Endothelial cell of umbilical vein (primary cell): ENCODE measurements at regions of chr13 and their contacts with region 1.

Region 1: GRCh38 chr13:109243311-109243951 is 543.0 kb downstream of the IRS2 start:
- DNase-seq: peak; percentile 78
- H3K4me3 ChIP-seq: no peak overlapping the region
- H3K27ac ChIP-seq: peak overlapping the region; percentile 84
- H3K4me1 ChIP-seq: peaks cover 27% of the 10 kb centered on the region
- H3K27me3 ChIP-seq: no peaks in the 10 kb centered on the region
- CTCF ChIP-seq: no peak
- POLR2A ChIP-seq: no peak

Region 2: GRCh38 chr13:109156181-109156935 is 87.1 kb before region 1 on chr13:
- CTCF ChIA-PET with region 1: interaction called, 5 read pairs
- POLR2A ChIA-PET with region 1: no interaction called
- dilution Hi-C with region 1: no loop called
- intact Hi-C with region 1: loop called (anchors 1 kb)
- DNase-seq: peak; percentile 91
- H3K4me3 ChIP-seq: no peak overlapping the region
- H3K27ac ChIP-seq: peak overlapping the region; percentile 87
- H3K4me1 ChIP-seq: peaks cover 39% of the 10 kb centered on the region
- H3K27me3 ChIP-seq: no peaks in the 10 kb centered on the region
- CTCF ChIP-seq: no peak
- POLR2A ChIP-seq: no peak

Region 3: GRCh38 chr13:109198585-109198984 is 44.8 kb before region 1 on chr13:
- CTCF ChIA-PET with region 1: no interaction called
- POLR2A ChIA-PET with region 1: no interaction called
- dilution Hi-C with region 1: no loop called
- intact Hi-C with region 1: loop called (anchors 1 kb)
- DNase-seq: peak; percentile 6
- H3K4me3 ChIP-seq: no peak overlapping the region
- H3K27ac ChIP-seq: peak overlapping the region; percentile 7
- H3K4me1 ChIP-seq: peaks cover 18% of the 10 kb centered on the region
- H3K27me3 ChIP-seq: no peaks in the 10 kb centered on the region
- CTCF ChIP-seq: no peak
- POLR2A ChIP-seq: no peak

Region 4: DNA sequence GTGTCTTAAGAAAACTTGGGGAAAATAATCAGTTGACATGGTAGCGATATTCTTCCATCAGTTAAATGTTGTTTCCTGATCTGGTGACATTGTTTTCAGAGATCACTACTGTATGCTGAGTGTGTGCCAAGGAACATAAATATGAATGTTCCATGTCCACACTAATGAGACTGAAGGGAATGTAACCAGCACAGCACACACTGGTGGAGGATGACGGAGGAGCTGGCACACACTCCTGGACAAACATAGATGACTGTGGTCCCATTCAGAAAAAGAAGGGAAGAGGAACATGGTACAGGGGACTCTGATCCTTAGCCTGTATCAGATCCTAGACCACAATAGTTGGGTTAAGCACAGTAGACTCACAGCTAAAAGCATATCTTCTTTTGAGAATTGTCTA is 39.2 kb before region 1 on chr13:
- CTCF ChIA-PET with region 1: no interaction called
- POLR2A ChIA-PET with region 1: no interaction called
- dilution Hi-C with region 1: no loop called
- intact Hi-C with region 1: loop called (anchors 1 kb)
- DNase-seq: peak; percentile 82
- H3K4me3 ChIP-seq: no peak overlapping the region
- H3K27ac ChIP-seq: peak overlapping the region; percentile 20
- H3K4me1 ChIP-seq: peaks cover 35% of the 10 kb centered on the region
- H3K27me3 ChIP-seq: no peaks in the 10 kb centered on the region
- CTCF ChIP-seq: no peak
- POLR2A ChIP-seq: no peak

Region 5: GRCh38 chr13:109233293-109233692 is 10.1 kb before region 1 on chr13:
- CTCF ChIA-PET with region 1: no interaction called
- POLR2A ChIA-PET with region 1: no interaction called
- dilution Hi-C with region 1: no loop called
- intact Hi-C with region 1: no loop called
- DNase-seq: no peak
- H3K4me3 ChIP-seq: no peak overlapping the region
- H3K27ac ChIP-seq: no peak overlapping the region
- H3K4me1 ChIP-seq: no peaks in the 10 kb centered on the region
- H3K27me3 ChIP-seq: peaks cover 0 to 4% of the 10 kb centered on the region in 2 experiments
- CTCF ChIP-seq: no peak
- POLR2A ChIP-seq: no peak

Region 6: GRCh38 chr13:109344552-109345157 is 101.2 kb after region 1 on chr13:
- CTCF ChIA-PET with region 1: no interaction called
- POLR2A ChIA-PET with region 1: no interaction called
- dilution Hi-C with region 1: no loop called
- intact Hi-C with region 1: loop called (anchors 1 kb)
- DNase-seq: peak; percentile 67
- H3K4me3 ChIP-seq: no peak overlapping the region
- H3K27ac ChIP-seq: peak overlapping the region; percentile 90
- H3K4me1 ChIP-seq: peaks cover 40% of the 10 kb centered on the region
- H3K27me3 ChIP-seq: no peaks in the 10 kb centered on the region
- CTCF ChIP-seq: no peak
- POLR2A ChIP-seq: no peak

Region 7: GRCh38 chr13:109440320-109440719 is 196.9 kb after region 1 on chr13:
- CTCF ChIA-PET with region 1: no interaction called
- POLR2A ChIA-PET with region 1: no interaction called
- dilution Hi-C with region 1: no loop called
- intact Hi-C with region 1: no loop called
- DNase-seq: no peak
- H3K4me3 ChIP-seq: no peak overlapping the region
- H3K27ac ChIP-seq: no peak overlapping the region
- H3K4me1 ChIP-seq: no peaks in the 10 kb centered on the region
- H3K27me3 ChIP-seq: no peaks in the 10 kb centered on the region
- CTCF ChIP-seq: no peak
- POLR2A ChIP-seq: no peak

Region 8: DNA sequence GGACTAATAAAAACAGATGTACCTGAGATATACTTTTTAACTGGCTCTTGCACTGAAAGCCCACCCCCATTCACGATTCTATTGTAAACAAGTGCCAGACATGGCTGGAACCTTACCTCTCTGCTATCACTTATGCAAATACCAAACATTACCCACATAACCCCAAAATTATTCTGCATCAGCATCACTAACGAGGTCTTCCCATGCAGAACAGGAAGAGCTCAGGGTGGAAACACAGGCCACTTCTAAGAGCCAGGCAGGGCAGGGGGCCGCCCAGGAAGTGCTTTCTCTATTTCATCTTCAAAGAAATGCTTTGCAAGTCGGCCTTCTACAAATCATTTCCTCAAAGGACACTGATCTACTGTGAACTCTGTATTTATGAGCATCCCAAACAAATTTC is 535.6 kb after region 1 on chr13:
- CTCF ChIA-PET with region 1: no interaction called
- POLR2A ChIA-PET with region 1: no interaction called
- dilution Hi-C with region 1: no loop called
- intact Hi-C with region 1: loop called (anchors 2 kb)
- DNase-seq: no peak
- H3K4me3 ChIP-seq: no peak overlapping the region
- H3K27ac ChIP-seq: no peak overlapping the region
- H3K4me1 ChIP-seq: peaks cover 6% of the 10 kb centered on the region
- H3K27me3 ChIP-seq: no peaks in the 10 kb centered on the region
- CTCF ChIP-seq: no peak
- POLR2A ChIP-seq: no peak